ENCODE measurements at regions of chr18 and their contacts with region 1.

Region 1: GRCh38 chr18:2917259-2918047 is 70.6 kb downstream of the EMILIN2 start:
- DNase-seq: no peak
- H3K4me3 ChIP-seq: no peak overlapping the region
- CTCF ChIP-seq: no peak

Region 2: DNA sequence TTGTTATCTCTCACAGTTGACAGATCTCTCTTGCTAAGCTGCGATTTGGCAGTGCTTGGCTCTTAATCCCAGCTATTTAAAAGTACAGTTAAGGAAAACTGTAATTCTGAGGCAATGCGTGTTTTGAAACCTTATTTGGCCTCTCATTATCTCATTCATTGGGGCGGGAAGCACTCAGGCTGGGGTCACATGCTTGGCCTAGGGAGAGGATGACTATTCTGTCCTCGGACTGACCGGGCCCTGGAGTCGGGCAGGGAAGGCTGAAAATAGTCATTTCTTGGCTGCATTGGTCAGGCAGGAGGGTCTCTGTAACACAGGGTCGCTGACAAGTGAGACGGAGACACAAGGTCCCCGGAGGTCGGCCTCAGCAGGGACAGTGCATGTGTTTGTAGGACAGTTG is 90.9 kb before region 1 on chr18:
- in situ Hi-C with region 1: loop called (anchors 5 kb)
- DNase-seq: no peak
- H3K4me3 ChIP-seq: no peak overlapping the region
- CTCF ChIP-seq: no peak

Region 3: DNA sequence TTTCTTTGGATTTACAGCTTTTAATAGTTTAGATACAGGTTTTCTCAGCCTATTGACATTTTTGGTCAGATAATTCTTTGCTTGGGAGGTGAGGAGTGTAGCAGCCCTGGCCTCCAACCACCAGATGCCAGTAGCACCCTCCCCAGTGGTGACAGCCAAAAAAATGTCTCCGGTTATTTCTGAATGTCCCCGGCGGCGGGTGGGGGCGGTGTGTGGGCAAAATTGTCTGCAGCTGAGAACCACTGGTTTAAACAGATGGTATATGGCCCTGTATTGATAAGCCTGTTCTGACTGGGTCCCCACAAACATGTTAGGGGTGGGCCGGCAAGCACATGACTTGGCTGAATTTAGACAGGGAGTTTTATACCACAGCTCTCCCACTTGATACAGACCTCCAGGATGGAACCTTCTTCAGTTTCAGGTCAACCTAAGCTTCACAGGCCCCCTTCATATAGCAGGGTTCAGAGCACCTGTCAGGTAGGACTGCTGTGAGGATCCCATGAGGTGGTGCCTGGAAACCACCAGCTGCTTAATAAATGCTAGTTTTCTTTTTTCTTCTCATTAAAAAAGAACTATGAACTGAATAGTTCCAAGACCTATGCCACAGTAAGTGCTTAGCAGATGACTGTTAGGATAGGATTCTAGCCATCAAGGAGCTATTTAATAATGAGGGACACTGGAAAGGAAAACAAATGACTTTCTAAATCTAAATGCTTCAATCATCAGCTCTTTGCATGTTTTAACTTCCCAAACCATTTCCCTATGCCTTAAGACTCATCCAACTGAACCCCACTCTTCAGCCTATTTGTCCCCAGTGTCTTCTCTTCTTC is 77.4 kb after region 1 on chr18:
- in situ Hi-C with region 1: loop called (anchors 10 kb)
- DNase-seq: no peak
- H3K4me3 ChIP-seq: no peak overlapping the region
- CTCF ChIP-seq: no peak